MCF 10A (cell line): ENCODE measurements at regions of chr1 and their contacts with region 1.

Region 1: GRCh38 chr1:109773146-109773899 is 9.6 kb upstream of the EPS8L3 start:
- DNase-seq: peak; percentile 90
- H3K4me3 Mint-ChIP-seq: no peak overlapping the region
- H3K27ac Mint-ChIP-seq: no peak overlapping the region
- H3K4me1 Mint-ChIP-seq: peaks cover 9% of the 10 kb centered on the region
- H3K27me3 Mint-ChIP-seq: no peaks in the 10 kb centered on the region
- CTCF ChIP-seq: peak; percentile 85

Region 2: GRCh38 chr1:109041621-109042468 is 731.5 kb before region 1 on chr1 and contains the start of gene WDR47:
- CTCF ChIA-PET with region 1: no interaction called
- POLR2A ChIA-PET with region 1: no interaction called
- intact Hi-C with region 1: no loop called
- DNase-seq: peak; percentile 96
- H3K4me3 Mint-ChIP-seq: peak within 1 kb of the TSS; percentile 94
- H3K27ac Mint-ChIP-seq: peak within 1 kb of the TSS; percentile 78
- H3K4me1 Mint-ChIP-seq: peaks cover 6% of the 10 kb centered on the region
- H3K27me3 Mint-ChIP-seq: no peaks in the 10 kb centered on the region
- CTCF ChIP-seq: no peak
- total RNA-seq, gene WDR47: 16.1 and 17.8 TPM in 2 replicates

Region 3: DNA sequence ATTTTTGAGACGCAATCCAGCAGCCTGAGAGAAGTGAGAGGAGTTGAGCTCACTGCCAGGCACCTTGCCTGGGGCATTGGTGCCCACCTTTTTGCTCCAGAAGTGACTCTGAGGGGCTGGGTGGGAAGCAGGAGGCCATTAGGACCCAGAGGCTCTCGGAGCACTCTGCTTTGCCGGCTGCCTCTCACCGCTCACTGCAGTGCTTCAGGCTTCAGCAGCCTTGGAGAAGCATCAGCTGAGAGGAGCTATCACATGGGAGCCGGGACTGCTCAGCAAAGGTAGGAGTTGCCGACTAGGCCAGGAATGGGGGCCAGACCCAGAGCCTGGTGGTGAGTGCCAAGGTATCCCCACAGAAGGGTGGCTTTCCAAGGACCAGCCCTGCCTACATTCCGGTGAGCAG is 233.6 kb before region 1 on chr1 and contains the start of gene GPR61:
- CTCF ChIA-PET with region 1: interaction called, 123 read pairs
- POLR2A ChIA-PET with region 1: no interaction called
- intact Hi-C with region 1: no loop called
- DNase-seq: no peak
- H3K4me3 Mint-ChIP-seq: no peak within 1 kb of the TSS
- H3K27ac Mint-ChIP-seq: no peak within 1 kb of the TSS
- H3K4me1 Mint-ChIP-seq: no peaks in the 10 kb centered on the region
- H3K27me3 Mint-ChIP-seq: no peaks in the 10 kb centered on the region
- CTCF ChIP-seq: no peak
- total RNA-seq, gene GPR61: not detected in 2 replicates

Region 4: DNA sequence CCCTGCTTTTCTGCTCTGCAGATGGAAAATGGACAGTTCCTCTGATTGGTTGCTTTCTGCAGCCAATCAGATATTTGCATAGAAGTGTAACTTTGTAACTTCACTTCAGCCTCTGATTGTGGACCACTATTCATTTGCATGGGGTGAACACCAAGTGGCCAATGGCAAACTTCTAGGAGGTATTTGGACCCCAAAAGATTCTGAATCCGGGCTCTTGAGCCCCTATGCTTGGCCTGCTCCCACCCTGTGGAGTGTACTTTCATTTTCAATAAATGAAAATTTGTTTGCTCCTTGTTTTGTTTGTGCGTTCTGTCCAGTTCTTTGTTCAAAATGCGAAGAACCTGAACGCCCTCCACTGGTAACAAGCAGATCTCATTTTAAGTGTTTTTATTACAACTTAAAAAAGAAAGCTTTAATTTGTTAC is 123.8 kb before region 1 on chr1:
- CTCF ChIA-PET with region 1: interaction called, 459 read pairs
- POLR2A ChIA-PET with region 1: interaction called, 3 read pairs
- intact Hi-C with region 1: no loop called
- DNase-seq: no peak
- H3K4me3 Mint-ChIP-seq: no peak overlapping the region
- H3K27ac Mint-ChIP-seq: no peak overlapping the region
- H3K4me1 Mint-ChIP-seq: no peaks in the 10 kb centered on the region
- H3K27me3 Mint-ChIP-seq: peaks cover 28% of the 10 kb centered on the region
- CTCF ChIP-seq: no peak

Region 5: GRCh38 chr1:109783429-109783831 is 10.1 kb after region 1 on chr1:
- CTCF ChIA-PET with region 1: interaction called, 18 read pairs
- POLR2A ChIA-PET with region 1: interaction called, 3 read pairs
- intact Hi-C with region 1: no loop called
- DNase-seq: peak; percentile 91
- H3K4me3 Mint-ChIP-seq: no peak overlapping the region
- H3K27ac Mint-ChIP-seq: peak overlapping the region; percentile 81
- H3K4me1 Mint-ChIP-seq: peaks cover 31% of the 10 kb centered on the region
- H3K27me3 Mint-ChIP-seq: no peaks in the 10 kb centered on the region
- CTCF ChIP-seq: no peak

Region 6: GRCh38 chr1:109877320-109877771 is 104.0 kb after region 1 on chr1:
- CTCF ChIA-PET with region 1: interaction called, 11 read pairs
- POLR2A ChIA-PET with region 1: no interaction called
- intact Hi-C with region 1: no loop called
- DNase-seq: peak; percentile 87
- H3K4me3 Mint-ChIP-seq: peak overlapping the region; percentile 29
- H3K27ac Mint-ChIP-seq: peak overlapping the region; percentile 96
- H3K4me1 Mint-ChIP-seq: peaks cover 37% of the 10 kb centered on the region
- H3K27me3 Mint-ChIP-seq: no peaks in the 10 kb centered on the region
- CTCF ChIP-seq: peak; percentile 21

Region 7: DNA sequence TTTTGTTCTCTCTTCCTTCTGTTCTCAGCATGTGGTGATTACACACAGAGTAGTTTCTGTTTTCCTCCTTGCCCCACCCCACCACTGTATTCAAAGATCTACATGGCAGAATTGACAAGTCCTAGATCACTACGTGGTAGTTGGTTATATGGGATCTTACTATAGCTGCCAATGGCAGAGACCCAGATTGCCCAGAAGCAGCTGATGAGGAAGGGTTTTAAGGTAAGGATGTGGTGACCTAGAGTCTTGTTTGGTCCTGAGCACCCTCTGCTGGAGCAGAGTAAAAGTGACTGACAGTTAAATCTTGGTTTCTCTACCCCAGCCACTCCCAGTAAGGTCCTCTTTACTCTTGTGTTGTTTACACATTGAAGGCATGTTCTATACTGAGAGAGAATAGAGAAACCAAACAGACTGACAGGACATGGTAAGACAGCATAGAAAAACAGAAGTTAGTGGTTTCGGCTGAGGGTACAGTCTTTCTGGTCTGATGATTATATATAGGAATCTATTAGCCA is 238.3 kb after region 1 on chr1:
- CTCF ChIA-PET with region 1: interaction called, 104 read pairs
- POLR2A ChIA-PET with region 1: no interaction called
- intact Hi-C with region 1: loop called (anchors 1 kb)
- DNase-seq: peak; percentile 73
- H3K4me3 Mint-ChIP-seq: no peak overlapping the region
- H3K27ac Mint-ChIP-seq: peak overlapping the region; percentile 39
- H3K4me1 Mint-ChIP-seq: peaks cover 13% of the 10 kb centered on the region
- H3K27me3 Mint-ChIP-seq: no peaks in the 10 kb centered on the region
- CTCF ChIP-seq: peak; percentile 46